Activated T-helper 2 cell treated with anti-CD3 and anti-CD28 coated beads, Interferon-gamma antibody, Interleukin-2, Interleukin-4, amounts not matched to agents 10 μg/mL and 5 μg/mL and 100 μg/mL, durations not matched to agents 14 hours and 24 hours and 36 hours (primary cell): ENCODE measurements at regions of chr12 and their contacts with region 1.

Region 1: GRCh38 chr12:50187084-50187900 is 20.1 kb upstream of the CERS5 start:
- DNase-seq: peak; percentile 29
- H3K4me3 Mint-ChIP-seq: peak overlapping the region; percentile 69
- H3K27ac Mint-ChIP-seq: peak overlapping the region; percentile 98
- H3K4me1 Mint-ChIP-seq: peaks cover 67% of the 10 kb centered on the region
- H3K27me3 Mint-ChIP-seq: no peaks in the 10 kb centered on the region

Region 2: DNA sequence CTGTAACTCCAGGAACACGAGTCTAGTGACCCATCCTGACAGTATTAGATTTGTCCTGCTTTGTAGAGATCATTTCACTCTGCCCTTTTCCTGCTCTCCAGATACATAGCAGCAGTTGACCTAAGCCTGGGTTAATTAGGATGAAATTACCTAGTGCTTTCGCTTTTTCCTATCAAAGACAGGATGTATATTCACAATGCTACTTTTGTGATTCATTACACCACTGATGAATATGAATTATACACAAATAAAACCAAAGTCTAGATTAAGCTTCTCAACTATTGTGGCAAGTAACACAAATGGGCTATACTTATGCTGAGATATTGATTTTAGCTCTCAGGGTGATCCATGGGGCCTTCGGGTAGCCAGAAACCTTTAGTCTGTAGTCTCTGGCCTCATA is 38.0 kb before region 1 on chr12:
- intact Hi-C with region 1: loop called (anchors 5 kb)
- DNase-seq: no peak
- H3K4me3 Mint-ChIP-seq: no peak overlapping the region
- H3K27ac Mint-ChIP-seq: peak overlapping the region; percentile 22
- H3K4me1 Mint-ChIP-seq: peaks cover 29% of the 10 kb centered on the region
- H3K27me3 Mint-ChIP-seq: no peaks in the 10 kb centered on the region

Region 3: DNA sequence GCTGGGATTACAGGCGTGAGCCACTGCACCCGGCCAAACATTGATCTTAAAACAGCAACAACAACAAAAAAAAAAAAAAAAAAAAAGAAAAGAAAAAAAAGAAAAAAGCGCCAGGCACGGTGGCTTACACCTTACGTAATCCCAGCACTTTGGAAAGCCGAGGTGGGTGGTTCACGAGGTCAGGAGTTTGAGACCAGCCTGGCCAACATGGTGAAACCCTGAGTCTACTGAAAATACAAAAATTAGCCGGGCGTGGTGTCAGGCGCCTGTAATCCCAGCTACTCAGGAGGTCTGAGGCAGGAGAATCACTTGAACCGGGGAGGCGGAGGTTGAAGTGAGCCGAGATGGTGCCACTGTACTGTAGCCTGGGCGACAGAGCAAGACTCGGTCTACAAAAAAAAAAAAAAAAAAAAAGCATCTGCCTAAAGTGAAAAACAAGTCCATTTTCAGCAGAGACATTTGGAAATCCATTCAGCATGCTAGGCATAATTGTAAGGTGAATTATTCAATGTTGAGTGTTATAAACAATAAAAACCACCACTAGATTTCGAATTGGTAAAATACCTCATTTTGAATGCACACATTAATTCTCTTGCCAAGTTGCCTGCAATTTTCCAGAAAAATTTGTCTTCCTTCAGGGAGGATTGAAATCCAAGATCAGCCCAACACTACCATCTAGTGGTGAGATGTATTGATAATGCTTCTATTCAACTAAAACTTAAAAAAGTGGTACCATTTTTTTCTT is 12.1 kb before region 1 on chr12:
- intact Hi-C with region 1: no loop called
- DNase-seq: no peak
- H3K4me3 Mint-ChIP-seq: no peak overlapping the region
- H3K27ac Mint-ChIP-seq: peak overlapping the region; percentile 28
- H3K4me1 Mint-ChIP-seq: peaks cover 9% of the 10 kb centered on the region
- H3K27me3 Mint-ChIP-seq: no peaks in the 10 kb centered on the region

Region 4: GRCh38 chr12:50222275-50222795 is 35.0 kb after region 1 on chr12:
- intact Hi-C with region 1: loop called (anchors 1 kb)
- DNase-seq: no peak
- H3K4me3 Mint-ChIP-seq: no peak overlapping the region
- H3K27ac Mint-ChIP-seq: no peak overlapping the region
- H3K4me1 Mint-ChIP-seq: peaks cover 28% of the 10 kb centered on the region
- H3K27me3 Mint-ChIP-seq: no peaks in the 10 kb centered on the region

Region 5: GRCh38 chr12:50246873-50247612 is 59.8 kb after region 1 on chr12:
- intact Hi-C with region 1: loop called (anchors 1 kb)
- DNase-seq: peak; percentile 40
- H3K4me3 Mint-ChIP-seq: peak overlapping the region; percentile 89
- H3K27ac Mint-ChIP-seq: peak overlapping the region; percentile 89
- H3K4me1 Mint-ChIP-seq: peaks cover 65% of the 10 kb centered on the region
- H3K27me3 Mint-ChIP-seq: no peaks in the 10 kb centered on the region

Region 6: DNA sequence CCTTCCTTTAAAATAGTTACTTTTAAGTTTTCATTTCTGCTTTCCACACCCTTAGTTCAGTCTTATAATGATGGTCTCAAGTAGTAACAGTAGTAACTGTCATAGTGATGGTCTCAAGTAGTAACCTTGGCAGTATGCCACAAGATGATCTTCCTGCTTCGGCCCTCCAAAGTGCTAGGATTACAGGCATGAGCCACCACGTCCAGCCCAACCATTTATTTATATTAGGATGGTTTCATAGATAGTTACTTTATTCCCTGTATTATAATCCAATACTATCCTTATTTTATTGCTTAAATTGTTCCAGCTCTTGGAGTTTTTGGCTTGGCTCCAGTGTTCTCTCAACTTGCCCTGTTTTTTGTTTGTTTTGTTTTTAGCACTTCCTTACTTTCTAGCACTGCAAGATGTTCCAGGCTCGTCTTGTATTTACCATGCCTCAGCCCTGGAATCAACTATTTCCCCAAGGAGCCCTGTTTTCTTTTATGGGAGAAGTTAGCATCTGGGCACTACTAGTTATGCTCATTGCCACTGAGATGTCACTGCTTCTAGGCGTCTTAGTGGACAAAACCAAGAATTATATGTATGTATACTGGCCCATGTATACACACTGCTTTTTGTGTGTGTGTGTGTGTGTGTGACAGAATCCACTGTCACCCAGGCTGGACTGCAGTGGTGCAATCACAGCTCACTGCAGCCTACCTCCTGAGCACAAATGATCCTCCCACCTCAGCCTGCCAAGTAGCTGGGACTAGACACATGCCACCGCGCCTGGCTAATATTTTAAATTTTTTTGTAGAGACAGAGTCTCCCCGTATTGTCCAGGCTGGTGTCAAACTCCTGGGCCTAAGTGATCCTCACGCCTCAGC is 70.6 kb after region 1 on chr12:
- intact Hi-C with region 1: loop called (anchors 1 kb)
- DNase-seq: no peak
- H3K4me3 Mint-ChIP-seq: no peak overlapping the region
- H3K27ac Mint-ChIP-seq: peak overlapping the region; percentile 13
- H3K4me1 Mint-ChIP-seq: peaks cover 59% of the 10 kb centered on the region
- H3K27me3 Mint-ChIP-seq: no peaks in the 10 kb centered on the region